ENCODE measurements at regions of chr5 and their contacts with region 1.

Region 1: DNA sequence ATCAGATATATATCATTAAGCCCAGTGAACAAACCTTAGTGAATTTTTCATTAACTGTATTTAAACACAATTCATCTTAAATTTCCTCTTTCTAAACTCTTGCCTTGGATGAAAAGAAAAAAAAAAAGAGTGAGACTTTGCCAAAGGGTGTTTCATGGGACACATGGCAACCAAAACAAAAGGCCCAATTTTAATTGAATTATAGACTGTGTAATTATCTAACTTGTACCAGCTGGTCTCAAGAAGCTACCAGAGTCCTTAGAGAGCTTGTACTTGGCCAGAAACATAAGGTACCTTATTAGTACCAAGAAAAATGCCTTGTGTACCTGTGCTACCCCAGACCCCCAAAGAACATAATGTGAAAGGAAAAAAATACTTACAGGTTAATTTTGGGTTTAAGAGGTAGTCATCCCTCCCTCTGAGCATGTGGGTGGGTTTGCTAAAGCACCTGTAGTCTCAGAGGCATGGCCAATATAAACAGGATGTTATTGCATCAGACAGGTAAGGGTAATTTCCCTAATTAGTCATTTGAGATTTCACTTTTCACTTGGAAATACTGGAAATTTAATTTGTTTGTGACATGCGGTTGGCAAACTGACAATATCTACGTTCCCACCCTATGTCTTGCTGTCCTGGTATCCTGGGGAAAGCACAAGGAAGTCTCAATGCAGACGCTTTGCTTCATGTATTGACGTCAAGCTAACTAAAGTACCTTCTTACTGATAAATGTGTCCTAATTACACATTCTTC is 90.1 kb downstream of the SNCAIP start:
- DNase-seq: peak; percentile 49
- H3K4me3 ChIP-seq: no peak overlapping the region
- H3K27ac ChIP-seq: no peak overlapping the region
- H3K4me1 ChIP-seq: no peaks in the 10 kb centered on the region
- H3K27me3 ChIP-seq: peaks cover 4% of the 10 kb centered on the region
- CTCF ChIP-seq: no peak

Region 2: DNA sequence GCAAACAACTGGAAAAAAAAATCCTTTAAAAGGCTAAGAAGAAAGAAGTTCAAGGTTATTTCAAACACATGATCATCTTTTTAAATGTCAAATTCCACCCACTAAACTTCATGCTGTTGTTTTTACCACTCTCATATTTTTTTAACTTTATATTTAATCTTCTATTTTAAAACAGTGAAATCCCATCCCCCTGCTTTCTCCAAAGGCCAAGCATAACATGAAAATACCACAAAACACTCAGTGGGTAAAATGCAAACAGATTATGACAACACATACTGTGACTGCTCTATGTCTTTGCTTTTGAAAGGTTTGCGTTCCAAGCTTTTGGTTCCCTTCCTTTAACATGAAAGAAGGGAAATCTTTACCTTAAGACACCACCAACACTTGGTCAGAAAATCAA is 37.5 kb after region 1 on chr5:
- CTCF ChIA-PET with region 1: no interaction called
- dilution Hi-C with region 1: no loop called
- in situ Hi-C with region 1: no loop called
- intact Hi-C with region 1: loop called (anchors 1 kb)
- DNase-seq: no peak
- H3K4me3 ChIP-seq: no peak overlapping the region
- H3K27ac ChIP-seq: no peak overlapping the region
- H3K4me1 ChIP-seq: no peaks in the 10 kb centered on the region
- H3K27me3 ChIP-seq: no peaks in the 10 kb centered on the region
- CTCF ChIP-seq: no peak

Measured in mammary epithelial cell (primary cell).